Mammary epithelial cell (primary cell): ENCODE measurements at regions of chr16 and their contacts with region 1.

Region 1: DNA sequence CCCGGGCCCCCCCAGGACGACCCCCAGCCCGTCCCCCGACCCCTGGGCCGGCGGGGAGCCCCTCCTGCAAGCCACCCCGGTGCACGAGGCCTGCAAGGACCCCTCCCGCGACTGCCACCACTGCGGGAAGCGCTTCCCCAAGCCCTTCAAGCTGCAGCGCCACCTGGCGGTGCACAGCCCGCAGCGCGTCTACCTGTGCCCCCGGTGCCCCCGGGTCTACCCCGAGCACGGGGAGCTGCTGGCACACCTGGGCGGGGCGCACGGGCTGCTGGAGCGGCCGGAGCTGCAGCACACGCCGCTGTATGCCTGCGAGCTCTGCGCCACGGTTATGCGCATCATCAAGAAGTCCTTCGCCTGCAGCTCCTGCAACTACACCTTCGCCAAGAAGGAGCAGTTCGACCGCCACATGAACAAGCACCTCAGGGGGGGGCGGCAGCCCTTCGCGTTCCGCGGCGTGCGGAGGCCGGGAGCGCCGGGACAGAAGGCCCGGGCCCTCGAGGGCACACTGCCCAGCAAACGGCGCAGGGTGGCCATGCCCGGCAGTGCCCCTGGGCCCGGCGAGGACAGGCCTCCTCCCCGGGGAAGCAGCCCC is 15.6 kb upstream of the ZFPM1 start:
- DNase-seq: peak; percentile 36
- H3K4me3 ChIP-seq: no peak overlapping the region
- H3K27ac ChIP-seq: no peak overlapping the region
- H3K4me1 ChIP-seq: no peaks in the 10 kb centered on the region
- H3K27me3 ChIP-seq: peaks cover under 1% of the 10 kb centered on the region
- CTCF ChIP-seq: peak; percentile 69 to 90

Region 2: GRCh38 chr16:87982491-87983415 is 454.7 kb before region 1 on chr16:
- CTCF ChIA-PET with region 1: no interaction called
- dilution Hi-C with region 1: no loop called
- in situ Hi-C with region 1: no loop called
- intact Hi-C with region 1: loop called (anchors 2 kb)
- DNase-seq: no peak
- H3K4me3 ChIP-seq: no peak overlapping the region
- H3K27ac ChIP-seq: no peak overlapping the region
- H3K4me1 ChIP-seq: no peaks in the 10 kb centered on the region
- H3K27me3 ChIP-seq: no peaks in the 10 kb centered on the region
- CTCF ChIP-seq: no peak

Region 3: DNA sequence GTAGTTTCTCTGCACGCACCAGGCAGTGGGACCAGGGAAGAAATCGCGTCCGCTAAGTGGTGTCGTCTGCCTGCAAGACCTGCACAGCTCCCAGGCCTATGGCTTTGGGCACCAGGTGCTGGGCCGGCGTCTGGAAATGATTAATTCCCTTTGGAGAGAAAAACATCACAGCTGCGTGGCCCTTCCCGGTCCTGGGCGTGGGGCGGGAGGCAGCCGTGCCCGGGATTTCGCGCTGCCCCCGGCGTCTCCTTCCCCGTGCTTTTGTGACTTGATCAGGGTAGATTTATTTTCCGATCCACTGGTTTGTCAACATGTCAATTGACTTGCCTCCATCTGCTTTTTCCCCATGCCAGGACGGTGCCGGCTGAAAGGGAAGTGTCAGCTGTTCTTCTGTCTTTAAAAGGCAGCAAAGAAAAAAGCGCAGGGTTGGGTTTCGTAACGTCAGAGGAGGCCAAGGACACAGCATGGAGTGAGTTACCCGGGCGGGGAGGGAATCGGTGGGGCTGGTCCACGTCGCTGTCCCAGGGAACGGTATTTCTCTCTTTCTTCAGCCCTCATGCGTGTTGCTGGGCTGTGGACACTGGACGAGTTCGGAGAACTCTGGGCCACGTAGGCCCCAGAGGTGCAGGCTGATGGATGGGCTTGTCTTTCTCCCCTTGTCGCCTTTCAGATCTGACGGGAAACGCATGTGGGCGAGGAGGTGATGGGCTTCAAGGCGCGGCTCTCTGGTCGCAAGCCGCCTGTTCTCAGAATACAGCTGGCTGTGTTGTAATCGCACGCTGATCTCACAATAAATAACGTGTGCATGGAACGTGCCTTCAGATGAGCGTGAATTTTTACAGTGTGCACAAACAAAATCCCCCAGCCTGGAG is 242.8 kb before region 1 on chr16:
- CTCF ChIA-PET with region 1: no interaction called
- dilution Hi-C with region 1: no loop called
- in situ Hi-C with region 1: loop called (anchors 10 to 25 kb)
- intact Hi-C with region 1: loop called (anchors 1 kb)
- DNase-seq: no peak
- H3K4me3 ChIP-seq: no peak overlapping the region
- H3K27ac ChIP-seq: no peak overlapping the region
- H3K4me1 ChIP-seq: no peaks in the 10 kb centered on the region
- H3K27me3 ChIP-seq: no peaks in the 10 kb centered on the region
- CTCF ChIP-seq: no peak

Region 4: DNA sequence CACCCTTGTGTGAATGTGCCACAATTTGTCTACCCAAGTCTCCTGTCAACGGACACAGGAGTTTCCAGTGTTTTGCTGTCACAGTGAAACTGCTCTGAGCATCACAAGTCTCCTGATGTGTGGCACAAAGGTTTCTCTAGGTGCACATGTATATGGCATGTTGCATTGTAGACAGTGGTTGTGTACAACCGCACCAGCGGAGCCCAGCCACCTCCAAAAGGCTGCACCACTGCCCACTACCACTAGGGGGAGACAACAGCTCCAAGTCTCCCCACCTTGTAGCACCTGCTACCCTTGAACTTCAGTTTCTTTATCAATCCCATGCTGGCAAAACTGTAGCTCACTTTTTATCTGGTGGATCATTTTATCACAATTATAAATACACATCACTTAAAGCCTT is 150.2 kb before region 1 on chr16:
- CTCF ChIA-PET with region 1: no interaction called
- dilution Hi-C with region 1: no loop called
- in situ Hi-C with region 1: no loop called
- intact Hi-C with region 1: loop called (anchors 5 kb)
- DNase-seq: no peak
- H3K4me3 ChIP-seq: no peak overlapping the region
- H3K27ac ChIP-seq: no peak overlapping the region
- H3K4me1 ChIP-seq: peaks cover 9% of the 10 kb centered on the region
- H3K27me3 ChIP-seq: no peaks in the 10 kb centered on the region
- CTCF ChIP-seq: peak; percentile 65 to 82